GM12878 (cell line): ENCODE measurements at regions of chr2 and their contacts with region 1.

Region 1: DNA sequence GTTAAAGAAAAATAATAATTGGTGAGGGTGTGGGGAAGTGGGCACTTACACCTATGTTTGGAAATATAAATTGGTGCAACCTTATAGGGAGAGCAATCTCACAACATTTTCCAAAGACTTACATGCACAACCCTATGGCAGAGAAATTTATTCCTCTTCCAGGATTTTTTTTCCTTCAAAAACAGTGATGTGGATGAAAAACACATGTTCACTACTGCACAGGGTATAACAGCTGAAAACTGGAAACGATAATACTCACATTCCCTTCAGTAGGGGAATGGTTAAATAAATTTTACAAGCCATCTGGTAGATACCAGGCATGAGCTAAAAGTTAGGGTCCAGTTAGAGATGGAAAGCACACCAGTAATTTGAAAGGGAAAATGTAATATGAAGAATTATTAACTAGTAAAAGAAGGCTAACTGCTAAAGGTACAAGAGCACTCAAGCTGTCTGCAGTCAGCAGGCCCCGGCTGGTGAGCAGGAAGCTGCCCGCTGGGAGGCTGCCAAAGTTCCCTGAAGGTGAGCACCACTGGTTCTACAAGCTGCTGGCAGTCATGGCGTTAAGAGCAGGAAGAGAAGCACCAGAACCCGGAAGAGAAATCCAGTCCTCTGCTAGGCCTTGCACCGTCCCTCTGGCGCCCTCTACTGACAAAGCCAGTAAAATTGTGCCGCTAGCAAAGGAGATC is 28.4 kb upstream of the CASP8 start:
- DNase-seq: peak; percentile 80
- ATAC-seq: peak; percentile 72
- H3K4me3 ChIP-seq: no peak overlapping the region
- H3K27ac ChIP-seq: peak overlapping the region; percentile 55
- H3K4me1 ChIP-seq: peaks cover 20% of the 10 kb centered on the region
- H3K27me3 ChIP-seq: no peaks in the 10 kb centered on the region
- CTCF ChIP-seq: peak; percentile 92 to 98 (median 95); a peak in 5 of 6 replicates
- EP300 ChIP-seq: no peak
- POLR2A ChIP-seq: peak; percentile 76
- RAD21 ChIP-seq: peak; percentile 98

Region 2: DNA sequence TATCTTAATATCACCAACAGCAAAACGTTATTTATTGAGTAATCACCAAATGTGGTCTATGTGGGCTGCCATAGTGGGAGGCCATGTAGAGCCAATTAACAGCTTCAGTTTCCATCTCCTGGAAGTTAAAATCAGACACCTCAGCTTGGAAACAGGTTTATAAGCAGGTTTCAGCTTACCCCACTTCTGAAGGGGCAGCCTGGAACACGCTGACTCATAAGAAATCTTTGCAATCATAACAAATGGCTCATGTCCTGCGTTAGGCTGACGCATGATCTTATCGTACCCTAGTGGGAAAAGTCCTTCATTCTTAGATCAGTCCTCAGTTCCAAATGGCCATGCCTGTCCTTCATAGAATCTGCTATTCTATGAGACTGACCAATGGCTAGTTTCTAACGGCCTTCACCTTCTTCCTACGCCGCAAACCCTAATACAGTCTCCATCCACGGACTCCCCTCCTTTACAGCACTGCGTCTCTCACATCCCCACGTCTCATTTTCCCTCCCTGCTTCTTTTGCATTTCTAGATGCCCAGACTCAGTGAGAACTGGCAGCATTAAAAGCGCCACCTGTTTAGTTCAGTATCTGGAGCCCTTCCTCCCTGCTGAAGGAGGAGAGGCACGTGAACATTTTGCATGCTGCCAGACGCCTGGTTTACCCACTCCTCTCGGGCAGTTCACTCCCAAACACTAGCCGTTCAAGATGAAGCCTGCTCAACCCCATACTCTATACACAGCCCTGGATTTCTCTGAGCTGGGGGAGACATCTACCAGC is 444.4 kb before region 1 on chr2:
- CTCF ChIA-PET with region 1: no interaction called
- POLR2A ChIA-PET with region 1: no interaction called
- RAD21 ChIA-PET with region 1: no interaction called
- SMC1A ChIA-PET with region 1: no interaction called
- in situ Hi-C with region 1: no loop called
- intact Hi-C with region 1: no loop called
- DNase-seq: no peak
- ATAC-seq: no peak
- H3K4me3 ChIP-seq: no peak overlapping the region
- H3K27ac ChIP-seq: no peak overlapping the region
- H3K4me1 ChIP-seq: no peaks in the 10 kb centered on the region
- H3K27me3 ChIP-seq: no peaks in the 10 kb centered on the region; a peak in 1 of 4 replicates
- CTCF ChIP-seq: no peak
- EP300 ChIP-seq: no peak
- POLR2A ChIP-seq: no peak
- RAD21 ChIP-seq: no peak

Region 3: GRCh38 chr2:200901459-200902072 is 330.4 kb before region 1 on chr2:
- CTCF ChIA-PET with region 1: interaction called, 60 read pairs
- POLR2A ChIA-PET with region 1: interaction called, 5 read pairs
- RAD21 ChIA-PET with region 1: interaction called, 43 read pairs
- SMC1A ChIA-PET with region 1: interaction called, 45 read pairs
- in situ Hi-C with region 1: loop called (anchors 5 kb)
- intact Hi-C with region 1: loop called (anchors 2 kb)
- DNase-seq: peak; percentile 72
- ATAC-seq: peak; percentile 99
- H3K4me3 ChIP-seq: no peak overlapping the region
- H3K27ac ChIP-seq: no peak overlapping the region
- H3K4me1 ChIP-seq: no peaks in the 10 kb centered on the region
- H3K27me3 ChIP-seq: no peaks in the 10 kb centered on the region
- CTCF ChIP-seq: peak; percentile 71 to 90 (median 87); a peak in 5 of 6 replicates
- EP300 ChIP-seq: no peak
- POLR2A ChIP-seq: no peak
- RAD21 ChIP-seq: peak; percentile 76

Region 4: DNA sequence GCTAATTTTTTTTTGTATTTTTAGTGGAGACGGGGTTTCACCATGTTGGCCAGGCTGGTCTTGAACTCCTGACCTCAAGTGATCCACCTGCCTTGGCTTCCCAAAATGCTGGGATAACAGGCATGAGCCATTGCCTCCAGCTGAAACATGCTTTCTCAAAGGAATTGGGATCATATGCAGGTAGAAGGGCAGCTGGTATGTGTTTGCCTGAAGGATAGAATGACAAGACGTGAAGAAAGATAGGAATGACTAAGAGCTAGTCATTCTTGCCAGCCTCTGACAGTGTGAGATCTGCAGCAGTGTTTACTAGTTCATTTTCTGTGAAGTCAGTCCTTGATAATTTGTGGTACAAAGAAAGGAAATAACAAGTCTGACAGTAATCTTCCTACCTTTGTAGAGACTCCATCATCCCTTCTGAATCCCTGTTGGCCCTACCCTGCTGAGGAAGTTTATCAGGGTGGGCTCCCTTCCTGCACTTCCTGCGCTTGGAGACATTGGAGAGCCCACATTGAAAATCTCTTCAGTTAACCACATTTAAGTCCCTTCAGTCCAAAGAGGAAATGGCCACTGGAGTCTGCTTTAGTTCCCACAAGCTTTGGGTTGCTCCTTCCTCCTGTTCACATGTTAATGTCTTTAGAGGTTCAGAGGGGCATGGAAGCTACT is 101.3 kb before region 1 on chr2:
- CTCF ChIA-PET with region 1: interaction called, 8 read pairs
- POLR2A ChIA-PET with region 1: interaction called, 4 read pairs
- RAD21 ChIA-PET with region 1: no interaction called
- SMC1A ChIA-PET with region 1: interaction called, 17 read pairs
- in situ Hi-C with region 1: no loop called
- intact Hi-C with region 1: loop called (anchors 2 kb)
- DNase-seq: no peak
- ATAC-seq: peak; percentile 7
- H3K4me3 ChIP-seq: peak overlapping the region; percentile 88
- H3K27ac ChIP-seq: peak overlapping the region; percentile 99
- H3K4me1 ChIP-seq: peaks cover 23% of the 10 kb centered on the region
- H3K27me3 ChIP-seq: no peaks in the 10 kb centered on the region
- CTCF ChIP-seq: no peak
- EP300 ChIP-seq: no peak; a peak in 1 of 4 replicates
- POLR2A ChIP-seq: no peak
- RAD21 ChIP-seq: no peak

Region 5: DNA sequence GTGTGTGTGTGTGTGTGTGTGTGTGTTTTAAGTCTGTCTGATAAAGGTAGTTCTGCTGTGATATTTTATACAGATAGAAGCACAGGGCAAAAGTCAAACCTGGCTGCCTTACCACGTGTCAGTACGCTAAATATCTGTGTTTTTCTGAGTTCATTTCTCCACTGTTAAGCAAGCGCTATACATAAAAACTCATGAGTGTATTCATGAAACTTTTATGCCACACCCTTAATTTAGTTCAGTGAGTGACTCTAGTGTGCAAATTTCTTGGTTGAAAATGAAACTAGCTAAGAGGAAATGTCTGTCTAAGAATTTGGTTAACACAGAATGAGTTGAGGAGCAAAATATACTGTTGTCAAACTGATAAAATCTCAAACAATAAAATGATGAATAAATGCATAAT is 37.8 kb before region 1 on chr2:
- CTCF ChIA-PET with region 1: interaction called, 85 read pairs
- POLR2A ChIA-PET with region 1: interaction called, 10 read pairs
- RAD21 ChIA-PET with region 1: interaction called, 33 read pairs
- SMC1A ChIA-PET with region 1: interaction called, 86 read pairs
- in situ Hi-C with region 1: loop called (anchors 5 kb)
- intact Hi-C with region 1: no loop called
- DNase-seq: peak; percentile 55
- ATAC-seq: peak; percentile 98
- H3K4me3 ChIP-seq: no peak overlapping the region
- H3K27ac ChIP-seq: no peak overlapping the region
- H3K4me1 ChIP-seq: peaks cover 12% of the 10 kb centered on the region; the same call in 1 of the 2 replicates
- H3K27me3 ChIP-seq: no peaks in the 10 kb centered on the region
- CTCF ChIP-seq: no peak
- EP300 ChIP-seq: peak; percentile 29 to 57; a peak in 2 of 4 replicates
- POLR2A ChIP-seq: no peak
- RAD21 ChIP-seq: no peak

Region 6: DNA sequence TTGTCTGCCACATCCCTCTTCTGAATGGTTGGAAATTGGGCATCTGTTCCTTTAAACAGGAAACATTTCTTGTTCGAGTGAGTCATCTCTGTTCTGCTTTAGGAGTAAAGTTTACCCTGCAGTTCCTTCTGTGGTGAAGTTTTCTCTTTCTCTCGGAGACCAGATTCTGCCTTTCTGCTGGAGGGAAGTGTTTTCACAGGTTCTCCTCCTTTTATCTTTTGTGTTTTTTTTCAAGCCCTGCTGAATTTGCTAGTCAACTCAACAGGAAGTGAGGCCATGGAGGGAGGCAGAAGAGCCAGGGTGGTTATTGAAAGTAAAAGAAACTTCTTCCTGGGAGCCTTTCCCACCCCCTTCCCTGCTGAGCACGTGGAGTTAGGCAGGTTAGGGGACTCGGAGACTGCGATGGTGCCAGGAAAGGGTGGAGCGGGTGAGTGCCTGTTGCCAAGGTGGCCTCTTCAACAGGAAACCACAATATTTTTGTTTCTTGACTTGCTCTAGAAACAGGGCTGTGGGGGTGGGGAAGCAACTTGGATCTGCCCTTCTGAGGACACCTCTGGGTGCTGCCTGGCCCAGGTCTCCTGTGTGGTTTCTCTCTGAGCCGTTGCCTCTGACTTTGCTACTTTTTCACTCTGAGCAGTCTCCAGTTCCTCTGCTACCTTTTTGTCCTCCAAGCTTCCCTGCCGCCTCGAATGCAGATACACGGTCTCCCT is 26.2 kb after region 1 on chr2:
- CTCF ChIA-PET with region 1: interaction called, 85 read pairs
- POLR2A ChIA-PET with region 1: interaction called, 33 read pairs
- RAD21 ChIA-PET with region 1: interaction called, 79 read pairs
- SMC1A ChIA-PET with region 1: interaction called, 87 read pairs
- in situ Hi-C with region 1: no loop called
- intact Hi-C with region 1: loop called (anchors 1 kb)
- DNase-seq: peak; percentile 79
- ATAC-seq: peak; percentile 79
- H3K4me3 ChIP-seq: peak overlapping the region; percentile 62
- H3K27ac ChIP-seq: peak overlapping the region; percentile 99
- H3K4me1 ChIP-seq: peaks cover 29% of the 10 kb centered on the region
- H3K27me3 ChIP-seq: no peaks in the 10 kb centered on the region
- CTCF ChIP-seq: 0 out of 6 replicates have a peak, but pooled peaks of 1 of the 3 experiments have one; percentile 16
- EP300 ChIP-seq: peak; percentile 64 to 97
- POLR2A ChIP-seq: peak; percentile 61
- RAD21 ChIP-seq: peak; percentile 53

Region 7: DNA sequence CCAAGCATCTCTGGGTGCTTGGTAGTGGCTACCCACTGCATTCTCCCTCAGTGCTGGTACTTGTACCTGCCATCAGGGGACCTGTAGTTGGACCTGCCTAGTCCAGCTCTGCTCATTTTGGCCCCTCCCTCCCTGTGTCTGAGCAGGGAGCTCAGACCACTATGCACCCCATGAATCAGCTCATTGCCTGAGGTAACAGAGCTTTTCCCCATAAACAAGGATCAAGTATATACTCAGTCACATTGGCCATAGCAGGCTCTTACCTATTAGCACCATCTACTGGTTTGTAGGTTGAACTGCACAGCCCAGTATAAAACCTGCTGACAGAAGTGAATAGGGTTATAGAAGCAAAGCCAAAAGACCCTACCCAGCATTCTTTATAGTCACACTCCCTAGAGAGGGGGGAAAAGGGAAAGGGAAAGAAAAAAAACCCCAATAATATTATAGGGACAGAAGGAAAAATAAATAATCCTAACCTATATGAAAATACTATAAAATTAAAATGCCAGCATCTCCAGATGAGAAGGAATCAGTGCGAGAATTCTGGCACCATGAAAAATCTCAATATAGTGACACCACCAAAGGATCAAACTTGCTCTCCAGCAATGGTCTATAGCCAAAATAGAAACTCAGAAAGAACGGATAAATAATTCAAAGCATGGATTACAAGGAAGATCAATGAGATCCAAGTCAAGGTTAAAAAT is 132.1 kb after region 1 on chr2:
- CTCF ChIA-PET with region 1: interaction called, 87 read pairs
- POLR2A ChIA-PET with region 1: interaction called, 3 read pairs
- RAD21 ChIA-PET with region 1: interaction called, 79 read pairs
- SMC1A ChIA-PET with region 1: interaction called, 54 read pairs
- in situ Hi-C with region 1: no loop called
- intact Hi-C with region 1: loop called (anchors 1 kb)
- DNase-seq: peak; percentile 30
- ATAC-seq: peak; percentile 94
- H3K4me3 ChIP-seq: no peak overlapping the region
- H3K27ac ChIP-seq: no peak overlapping the region
- H3K4me1 ChIP-seq: no peaks in the 10 kb centered on the region
- H3K27me3 ChIP-seq: no peaks in the 10 kb centered on the region
- CTCF ChIP-seq: peak; percentile 83 to 86 (median 86)
- EP300 ChIP-seq: no peak
- POLR2A ChIP-seq: no peak
- RAD21 ChIP-seq: peak; percentile 97

Region 8: GRCh38 chr2:202178342-202178958 is 946.5 kb after region 1 on chr2:
- CTCF ChIA-PET with region 1: interaction called, 3 read pairs
- POLR2A ChIA-PET with region 1: no interaction called
- RAD21 ChIA-PET with region 1: no interaction called
- SMC1A ChIA-PET with region 1: no interaction called
- in situ Hi-C with region 1: no loop called
- intact Hi-C with region 1: loop called (anchors 10 kb)
- DNase-seq: peak; percentile 24
- ATAC-seq: peak; percentile 97
- H3K4me3 ChIP-seq: no peak overlapping the region
- H3K27ac ChIP-seq: no peak overlapping the region
- H3K4me1 ChIP-seq: no peaks in the 10 kb centered on the region
- H3K27me3 ChIP-seq: no peaks in the 10 kb centered on the region
- CTCF ChIP-seq: peak; percentile 77 to 81 (median 78)
- EP300 ChIP-seq: no peak
- POLR2A ChIP-seq: no peak
- RAD21 ChIP-seq: peak; percentile 97